ENCODE measurements at regions of chr5 and their contacts with region 1.

Region 1: DNA sequence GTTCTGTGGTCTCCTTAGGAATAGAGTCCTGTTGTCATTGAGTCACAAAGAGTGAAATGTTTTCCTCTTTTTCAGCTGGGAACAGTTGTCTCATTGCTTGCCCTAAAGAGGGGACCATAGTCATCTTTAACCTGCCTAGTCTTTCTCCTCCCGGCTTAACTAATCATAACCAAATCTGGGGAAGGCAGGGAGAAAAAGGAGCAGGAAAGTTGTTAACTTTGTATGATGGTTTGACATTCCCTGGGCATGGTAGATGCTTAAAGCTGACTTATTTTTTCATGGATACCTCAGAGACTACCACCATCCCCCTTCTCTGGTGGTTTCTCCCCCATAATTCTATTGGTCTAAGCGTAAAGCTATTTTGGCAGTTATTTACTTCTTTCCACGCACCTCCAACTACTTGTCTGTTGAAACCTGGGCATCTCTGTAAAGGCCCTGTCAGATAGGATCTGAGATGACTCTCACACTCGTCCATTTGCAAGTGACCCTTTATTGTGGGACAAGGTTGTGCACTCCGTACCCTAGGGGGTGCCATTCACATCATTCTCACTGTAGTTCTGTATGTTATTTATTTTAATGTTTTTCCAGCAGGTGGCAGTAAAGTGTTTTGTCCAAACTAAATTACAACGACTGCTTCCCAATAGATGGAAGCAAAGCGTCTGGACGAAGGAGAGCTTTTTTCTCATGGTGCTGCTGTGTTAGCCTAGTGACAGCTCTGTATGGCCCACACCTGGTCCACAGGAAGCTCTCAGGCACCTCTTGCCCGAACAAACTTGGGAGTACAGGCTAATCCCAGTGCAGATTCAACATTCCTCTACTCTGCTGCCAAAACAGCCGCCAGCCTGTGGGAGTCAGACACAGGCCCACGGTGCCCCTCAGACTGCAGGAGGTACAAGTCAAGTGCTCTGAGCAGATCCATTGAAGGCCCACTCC is 3.0 kb upstream of the FAM13B start:
- DNase-seq: peak; percentile 96
- H3K4me3 Mint-ChIP-seq: no peak overlapping the region
- H3K27ac Mint-ChIP-seq: peak overlapping the region; percentile 4
- H3K4me1 Mint-ChIP-seq: peaks cover 26% of the 10 kb centered on the region
- H3K27me3 Mint-ChIP-seq: no peaks in the 10 kb centered on the region
- CTCF ChIP-seq: peak; percentile 93

Region 2: DNA sequence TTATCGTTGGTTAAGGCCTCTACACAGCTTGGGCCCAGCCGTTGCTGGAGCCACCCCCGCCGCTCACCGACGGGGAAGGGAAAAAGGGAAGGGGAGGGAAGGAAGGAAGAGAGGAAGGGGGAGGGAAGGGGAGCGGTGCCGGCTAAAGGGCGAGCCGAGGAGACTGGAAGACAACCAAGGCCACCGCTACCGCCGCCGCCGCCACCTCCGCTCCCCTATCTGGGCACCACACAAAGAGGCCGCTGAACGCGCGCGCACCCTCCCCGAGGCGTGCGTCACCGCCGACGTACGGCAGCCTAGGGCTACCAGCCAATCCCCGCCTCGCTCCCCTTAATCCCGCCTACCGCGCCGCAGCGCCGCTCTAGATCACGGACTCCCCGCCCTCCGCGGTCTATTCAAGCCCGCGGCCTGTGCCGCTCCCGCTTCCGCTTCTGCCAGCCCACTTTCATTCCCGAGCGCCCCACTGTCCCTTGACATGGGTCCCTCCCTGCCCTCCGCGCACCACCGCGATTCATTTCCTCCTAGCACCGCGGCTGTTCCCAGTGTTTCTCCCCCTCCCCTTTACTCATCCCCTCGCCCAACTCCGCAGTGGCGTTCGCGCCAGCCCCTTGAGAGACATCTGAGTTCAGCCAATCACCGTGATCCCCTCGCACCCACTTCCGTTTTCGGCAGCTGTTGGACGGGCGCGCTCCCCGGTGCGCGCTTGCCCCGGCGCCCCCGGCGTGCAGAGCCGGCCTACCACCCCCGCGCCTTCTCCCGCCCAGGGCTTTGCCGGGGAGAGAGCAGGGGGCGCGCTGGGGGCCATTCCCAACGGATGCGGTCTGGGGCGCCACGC is 281.5 kb before region 1 on chr5 and contains the start of gene HNRNPA0:
- CTCF ChIA-PET with region 1: interaction called, 8 read pairs
- POLR2A ChIA-PET with region 1: interaction called, 26 read pairs
- intact Hi-C with region 1: loop called (anchors 5 kb)
- DNase-seq: peak; percentile 98
- H3K4me3 Mint-ChIP-seq: peak within 1 kb of the TSS; percentile 87
- H3K27ac Mint-ChIP-seq: peak within 1 kb of the TSS; percentile 99
- H3K4me1 Mint-ChIP-seq: peaks cover 28% of the 10 kb centered on the region
- H3K27me3 Mint-ChIP-seq: no peaks in the 10 kb centered on the region
- CTCF ChIP-seq: no peak
- total RNA-seq, gene HNRNPA0: 30.8 and 31.8 TPM in 2 replicates

Region 3: GRCh38 chr5:137989419-137989818 is 46.5 kb before region 1 on chr5:
- CTCF ChIA-PET with region 1: interaction called, 11 read pairs
- POLR2A ChIA-PET with region 1: no interaction called
- intact Hi-C with region 1: no loop called
- DNase-seq: no peak
- H3K4me3 Mint-ChIP-seq: no peak overlapping the region
- H3K27ac Mint-ChIP-seq: no peak overlapping the region
- H3K4me1 Mint-ChIP-seq: peaks cover under 1% of the 10 kb centered on the region
- H3K27me3 Mint-ChIP-seq: no peaks in the 10 kb centered on the region
- CTCF ChIP-seq: no peak

Region 4: DNA sequence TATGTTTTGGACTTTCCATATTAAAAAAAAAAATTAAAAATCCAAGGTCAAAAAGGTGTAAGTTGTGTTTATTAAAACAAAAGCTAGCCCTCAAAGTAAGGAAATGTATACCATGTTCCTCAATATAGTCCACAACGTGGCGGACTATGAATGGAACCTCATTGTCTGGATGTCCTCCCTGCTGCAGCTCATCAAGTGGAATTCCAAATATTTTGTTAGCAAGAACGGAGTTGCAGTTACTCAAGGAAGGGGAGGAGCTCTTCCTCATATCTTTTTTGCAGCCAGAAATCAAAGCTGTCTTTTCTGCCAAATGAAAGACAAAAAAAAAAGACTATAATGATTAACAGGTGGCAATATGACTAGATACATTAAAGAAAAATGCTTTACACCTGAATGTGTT is 17.0 kb before region 1 on chr5:
- CTCF ChIA-PET with region 1: interaction called, 17 read pairs
- POLR2A ChIA-PET with region 1: interaction called, 12 read pairs
- intact Hi-C with region 1: no loop called
- DNase-seq: no peak
- H3K4me3 Mint-ChIP-seq: no peak overlapping the region
- H3K27ac Mint-ChIP-seq: no peak overlapping the region
- H3K4me1 Mint-ChIP-seq: peaks cover 16% of the 10 kb centered on the region
- H3K27me3 Mint-ChIP-seq: no peaks in the 10 kb centered on the region
- CTCF ChIP-seq: no peak

Region 5: GRCh38 chr5:138065102-138065501 is 29.2 kb after region 1 on chr5:
- CTCF ChIA-PET with region 1: interaction called, 213 read pairs
- POLR2A ChIA-PET with region 1: interaction called, 7 read pairs
- intact Hi-C with region 1: loop called (anchors 1 kb)
- DNase-seq: no peak
- H3K4me3 Mint-ChIP-seq: no peak overlapping the region
- H3K27ac Mint-ChIP-seq: no peak overlapping the region
- H3K4me1 Mint-ChIP-seq: peaks cover 7% of the 10 kb centered on the region
- H3K27me3 Mint-ChIP-seq: no peaks in the 10 kb centered on the region
- CTCF ChIP-seq: peak; percentile 18

Region 6: GRCh38 chr5:138128334-138128733 is 92.5 kb after region 1 on chr5:
- CTCF ChIA-PET with region 1: interaction called, 107 read pairs
- POLR2A ChIA-PET with region 1: interaction called, 11 read pairs
- intact Hi-C with region 1: loop called (anchors 1 kb)
- DNase-seq: no peak
- H3K4me3 Mint-ChIP-seq: no peak overlapping the region
- H3K27ac Mint-ChIP-seq: no peak overlapping the region
- H3K4me1 Mint-ChIP-seq: peaks cover under 1% of the 10 kb centered on the region
- H3K27me3 Mint-ChIP-seq: peaks cover 24% of the 10 kb centered on the region
- CTCF ChIP-seq: no peak

Region 7: DNA sequence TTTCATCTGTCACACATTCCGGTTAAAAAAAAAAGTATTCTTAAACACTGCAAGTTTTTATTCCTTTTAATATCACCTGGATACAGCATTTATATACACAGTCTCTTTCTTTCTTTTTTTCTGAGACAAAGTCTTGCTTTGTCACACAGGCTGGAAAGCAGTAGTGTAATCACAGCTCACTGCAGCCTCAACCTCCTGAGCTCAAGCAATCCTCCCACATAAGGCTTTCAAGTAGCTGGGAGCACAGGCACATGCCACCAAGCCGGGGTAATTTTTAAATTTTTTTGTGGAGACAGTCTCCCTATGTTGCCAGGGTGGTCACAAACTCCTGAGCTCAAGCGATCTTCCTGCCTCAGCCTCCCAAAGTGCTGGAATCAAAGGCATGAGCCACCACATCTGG is 157.0 kb after region 1 on chr5:
- CTCF ChIA-PET with region 1: no interaction called
- POLR2A ChIA-PET with region 1: no interaction called
- intact Hi-C with region 1: no loop called
- DNase-seq: no peak
- H3K4me3 Mint-ChIP-seq: no peak overlapping the region
- H3K27ac Mint-ChIP-seq: no peak overlapping the region
- H3K4me1 Mint-ChIP-seq: no peaks in the 10 kb centered on the region
- H3K27me3 Mint-ChIP-seq: no peaks in the 10 kb centered on the region
- CTCF ChIP-seq: no peak

Measured in MCF 10A (cell line).